Tibial artery (tissue), 4 donors: ENCODE measurements at regions of chr6 and their contacts with region 1.

Region 1: DNA sequence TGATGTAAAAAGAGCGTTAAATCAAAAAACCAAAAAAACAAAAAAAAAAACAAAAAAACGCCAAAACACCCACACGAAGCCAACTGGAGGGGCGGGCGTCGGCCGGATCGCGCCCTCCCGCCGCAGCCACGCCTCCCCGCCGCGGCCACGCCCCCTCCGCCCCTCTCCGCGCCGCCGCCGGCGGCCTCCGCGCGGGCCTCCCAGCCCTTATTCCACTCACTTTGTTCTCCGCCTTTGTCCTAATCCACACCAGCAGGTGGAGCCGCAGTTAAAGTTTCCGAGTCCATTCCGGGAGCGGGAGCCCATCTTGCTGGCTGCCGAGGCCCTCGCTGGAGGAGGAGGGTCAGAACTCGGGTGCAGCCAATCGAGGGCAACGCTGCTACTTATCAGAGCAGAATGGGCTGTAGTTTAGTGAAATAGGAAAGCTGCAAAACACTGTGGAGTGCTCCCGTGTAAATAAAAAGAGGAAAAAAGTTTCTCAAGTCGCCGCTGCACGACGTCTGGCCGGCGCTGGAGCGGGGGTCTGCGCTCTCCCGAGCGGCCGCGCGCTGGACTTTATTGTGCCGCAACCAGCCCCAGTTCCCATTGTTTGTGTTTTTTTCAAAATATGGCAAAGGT is at the start of gene ASF1A:
- DNase-seq: peak; percentile 98 to 99
- H3K4me3 ChIP-seq: peak within 1 kb of the TSS; percentile 76 to 91
- H3K27ac ChIP-seq: peak within 1 kb of the TSS; percentile 87 to 95
- H3K4me1 ChIP-seq: peaks cover 0 to 41% (median 13%) of the 10 kb centered on the region in 4 donors
- H3K27me3 ChIP-seq: no peaks in the 10 kb centered on the region
- CTCF ChIP-seq: peak; percentile 42 to 61

Region 2: GRCh38 chr6:118651282-118652050 is 242.4 kb before region 1 on chr6 and contains the start of gene CEP85L:
- intact Hi-C with region 1: loop called (anchors 2 kb)
- DNase-seq: peak; percentile 89 to 94
- H3K4me3 ChIP-seq: peak within 1 kb of the TSS; percentile 69 to 86
- H3K27ac ChIP-seq: peak within 1 kb of the TSS; percentile 91 to 95
- H3K4me1 ChIP-seq: peaks cover 0 to 18% (median 10%) of the 10 kb centered on the region in 4 donors
- H3K27me3 ChIP-seq: no peaks in the 10 kb centered on the region
- CTCF ChIP-seq: peak in 1 of 2 experiments; percentile 36

Region 3: GRCh38 chr6:118791499-118791898 is 102.4 kb before region 1 on chr6:
- intact Hi-C with region 1: no loop called
- DNase-seq: no peak
- H3K4me3 ChIP-seq: no peak overlapping the region
- H3K27ac ChIP-seq: no peak overlapping the region
- H3K4me1 ChIP-seq: no peaks in the 10 kb centered on the region
- H3K27me3 ChIP-seq: no peaks in the 10 kb centered on the region
- CTCF ChIP-seq: no peak

Region 4: DNA sequence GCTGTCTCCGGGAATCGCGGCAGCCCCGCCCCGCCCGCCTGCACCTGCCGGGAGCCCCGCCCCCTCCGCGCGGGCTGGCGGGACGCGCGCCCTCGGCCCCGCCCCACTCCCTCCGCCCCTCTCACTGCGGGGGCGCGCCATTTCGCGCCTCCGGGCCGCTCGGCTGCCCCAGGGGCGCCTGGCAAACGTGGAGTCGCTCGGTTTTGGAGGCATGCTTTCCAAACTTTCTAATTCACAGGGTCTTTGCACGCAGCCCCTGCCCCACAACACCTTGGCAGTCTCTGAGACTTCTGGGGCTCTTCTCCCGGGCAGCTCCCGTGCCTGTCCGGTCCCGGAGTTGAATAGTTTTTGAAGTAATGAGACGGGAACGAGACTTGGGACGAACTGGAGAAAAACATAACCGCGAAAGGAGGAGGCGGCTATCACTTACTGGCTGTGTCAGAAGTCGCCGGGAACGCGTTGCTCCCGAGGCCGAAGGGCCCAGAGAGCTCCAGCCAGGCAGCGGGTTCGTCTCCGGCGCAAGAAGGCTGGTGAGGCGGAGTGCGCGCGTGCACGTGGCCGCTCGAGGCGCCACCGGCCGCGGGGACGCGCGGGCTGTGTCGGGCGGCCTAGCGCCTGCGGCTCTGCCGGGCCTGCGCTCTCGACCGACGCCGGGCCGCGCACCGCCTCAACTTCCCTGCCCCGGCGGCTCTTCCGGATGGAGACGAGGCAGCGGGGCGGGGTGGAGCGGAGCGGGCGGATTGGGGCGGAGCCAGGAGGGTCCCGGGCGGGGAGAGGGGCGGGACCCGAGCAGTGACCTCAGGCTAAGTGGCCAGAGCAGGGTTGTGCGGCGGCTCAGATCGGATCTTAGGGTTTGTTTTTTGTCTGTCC is 40.8 kb after region 1 on chr6 and contains the start of gene MCM9:
- intact Hi-C with region 1: loop called (anchors 5 kb)
- DNase-seq: peak; percentile 79 to 91
- H3K4me3 ChIP-seq: peak within 1 kb of the TSS; percentile 64 to 80
- H3K27ac ChIP-seq: peak within 1 kb of the TSS; percentile 90 to 96
- H3K4me1 ChIP-seq: peaks cover 0 to 15% (median 7%) of the 10 kb centered on the region in 4 donors
- H3K27me3 ChIP-seq: no peaks in the 10 kb centered on the region
- CTCF ChIP-seq: no peak